Activated CD8-positive, alpha-beta T cell treated with anti-CD3 and anti-CD28 coated beads for 36 hours (primary cell): ENCODE measurements at regions of chr19 and their contacts with region 1.

Region 1: GRCh38 chr19:8355631-8356402 is 8.1 kb upstream of the ANGPTL4 start:
- DNase-seq: no peak
- ATAC-seq: peak; percentile 70
- H3K4me3 Mint-ChIP-seq: no peak overlapping the region
- H3K27ac Mint-ChIP-seq: no peak overlapping the region
- H3K4me1 Mint-ChIP-seq: peaks cover 10% of the 10 kb centered on the region
- H3K27me3 Mint-ChIP-seq: peaks cover 11% of the 10 kb centered on the region
- CTCF ChIP-seq: no peak

Region 2: GRCh38 chr19:8334458-8335342 is 21.1 kb before region 1 on chr19:
- CTCF ChIA-PET with region 1: interaction called, 35 read pairs
- POLR2A ChIA-PET with region 1: interaction called, 3 read pairs
- intact Hi-C with region 1: no loop called
- DNase-seq: peak; percentile 56
- ATAC-seq: peak; percentile 74
- H3K4me3 Mint-ChIP-seq: no peak overlapping the region
- H3K27ac Mint-ChIP-seq: no peak overlapping the region
- H3K4me1 Mint-ChIP-seq: peaks cover 9% of the 10 kb centered on the region
- H3K27me3 Mint-ChIP-seq: peaks cover 31% of the 10 kb centered on the region
- CTCF ChIP-seq: no peak

Region 3: DNA sequence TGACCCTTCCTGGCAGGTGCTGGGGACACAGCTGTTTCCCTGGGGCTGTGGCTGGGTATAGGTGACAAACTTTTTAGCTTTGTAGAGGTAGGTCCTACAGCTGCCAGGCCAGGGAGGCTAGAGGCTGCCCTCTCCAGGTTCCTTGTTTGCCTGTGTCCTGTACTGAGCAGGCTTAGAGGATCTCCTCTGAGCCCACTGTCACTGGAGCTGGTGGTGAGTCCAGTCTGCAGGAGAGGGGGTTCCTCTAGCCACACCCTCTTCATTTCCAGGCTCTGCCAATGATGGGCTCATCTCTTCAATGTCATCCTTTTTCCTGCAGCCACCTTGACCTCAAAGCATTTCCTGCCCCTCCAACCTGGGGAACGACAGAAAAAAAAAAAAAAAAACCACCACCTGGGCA is 21.8 kb after region 1 on chr19:
- CTCF ChIA-PET with region 1: interaction called, 23 read pairs
- POLR2A ChIA-PET with region 1: no interaction called
- intact Hi-C with region 1: no loop called
- DNase-seq: no peak
- ATAC-seq: peak; percentile 49
- H3K4me3 Mint-ChIP-seq: no peak overlapping the region
- H3K27ac Mint-ChIP-seq: no peak overlapping the region
- H3K4me1 Mint-ChIP-seq: peaks cover 9% of the 10 kb centered on the region
- H3K27me3 Mint-ChIP-seq: no peaks in the 10 kb centered on the region
- CTCF ChIP-seq: no peak

Region 4: GRCh38 chr19:8396563-8397203 is 40.9 kb after region 1 on chr19:
- CTCF ChIA-PET with region 1: interaction called, 66 read pairs
- POLR2A ChIA-PET with region 1: interaction called, 7 read pairs
- intact Hi-C with region 1: loop called (anchors 5 kb)
- DNase-seq: peak; percentile 89
- ATAC-seq: peak; percentile 96
- H3K4me3 Mint-ChIP-seq: no peak overlapping the region
- H3K27ac Mint-ChIP-seq: peak overlapping the region; percentile 70
- H3K4me1 Mint-ChIP-seq: peaks cover 34% of the 10 kb centered on the region
- H3K27me3 Mint-ChIP-seq: no peaks in the 10 kb centered on the region
- CTCF ChIP-seq: peak; percentile 87

Region 5: DNA sequence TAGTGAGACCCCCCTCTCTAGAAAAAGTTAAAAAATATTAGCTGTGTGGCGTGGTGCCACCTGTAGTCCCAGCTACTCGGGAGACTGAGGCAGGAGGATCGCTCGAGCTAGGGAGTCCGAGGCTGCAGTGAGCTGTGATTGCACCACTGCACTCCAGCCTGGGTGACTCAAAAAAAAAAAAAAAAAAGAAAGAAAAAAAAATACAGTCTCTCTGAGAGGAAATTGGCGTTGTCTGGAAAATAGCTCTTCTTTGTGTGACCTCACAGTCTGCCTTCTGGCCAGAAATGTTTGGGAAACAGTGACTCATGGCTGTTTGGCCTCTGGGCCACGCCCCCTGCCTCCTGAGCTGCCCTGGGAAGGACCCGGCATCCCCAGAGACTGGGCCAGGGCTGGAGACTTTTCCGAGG is 68.0 kb after region 1 on chr19:
- CTCF ChIA-PET with region 1: interaction called, 14 read pairs
- POLR2A ChIA-PET with region 1: no interaction called
- intact Hi-C with region 1: no loop called
- DNase-seq: no peak
- ATAC-seq: peak; percentile 24
- H3K4me3 Mint-ChIP-seq: no peak overlapping the region
- H3K27ac Mint-ChIP-seq: no peak overlapping the region
- H3K4me1 Mint-ChIP-seq: no peaks in the 10 kb centered on the region
- H3K27me3 Mint-ChIP-seq: no peaks in the 10 kb centered on the region
- CTCF ChIP-seq: no peak

Region 6: GRCh38 chr19:8505680-8506401 is 150.0 kb after region 1 on chr19:
- CTCF ChIA-PET with region 1: interaction called, 16 read pairs
- POLR2A ChIA-PET with region 1: no interaction called
- intact Hi-C with region 1: no loop called
- DNase-seq: peak; percentile 75
- ATAC-seq: peak; percentile 75
- H3K4me3 Mint-ChIP-seq: peak overlapping the region; percentile 86
- H3K27ac Mint-ChIP-seq: peak overlapping the region; percentile 85
- H3K4me1 Mint-ChIP-seq: peaks cover 6% of the 10 kb centered on the region
- H3K27me3 Mint-ChIP-seq: no peaks in the 10 kb centered on the region
- CTCF ChIP-seq: peak; percentile 73